CD4-positive, alpha-beta T cell (primary cell): ENCODE measurements at regions of chr4 and their contacts with region 1.

Region 1: DNA sequence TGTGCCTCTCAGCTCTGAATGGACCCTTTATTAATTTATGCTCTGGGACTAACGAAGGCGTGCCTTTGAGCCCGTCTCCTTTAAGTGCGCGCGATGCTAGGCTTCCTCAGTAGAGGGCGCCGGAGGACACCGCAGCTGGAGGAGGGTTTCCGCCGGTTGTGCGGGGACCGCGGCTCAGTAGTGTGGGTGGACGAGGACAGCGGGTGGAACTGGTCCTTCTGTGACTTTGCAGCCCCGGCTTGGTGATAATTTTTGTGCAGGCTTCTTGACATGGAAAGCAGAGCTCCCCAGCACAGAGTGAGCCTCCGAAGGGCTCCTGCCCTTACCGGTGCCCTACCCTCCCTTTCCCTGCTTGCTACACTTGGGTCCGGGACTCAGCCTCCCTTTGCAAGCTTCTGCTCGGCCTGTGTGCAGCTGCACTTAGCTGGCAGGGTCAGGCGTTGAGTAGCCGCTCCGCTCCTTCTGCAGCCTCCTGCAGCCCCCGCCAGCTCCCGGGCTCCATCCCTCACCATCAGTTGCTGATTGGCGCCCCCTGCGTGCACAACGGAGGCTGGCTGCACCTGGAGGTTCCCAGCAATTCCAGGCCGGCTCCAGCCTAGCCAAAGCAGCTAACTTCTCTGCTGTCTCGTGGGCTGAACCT is 26.8 kb upstream of the BOD1L1 start:
- DNase-seq: peak; percentile 55 to 84 (median 73)
- ATAC-seq: peak; percentile 93
- H3K4me3 ChIP-seq: peak overlapping the region; percentile 60
- H3K4me3 Mint-ChIP-seq: peak overlapping the region; percentile 94
- H3K27ac ChIP-seq: no peak overlapping the region
- H3K27ac Mint-ChIP-seq: no peak overlapping the region
- H3K4me1 ChIP-seq: peaks cover 6% of the 10 kb centered on the region
- H3K4me1 Mint-ChIP-seq: peaks cover 18% of the 10 kb centered on the region
- H3K27me3 ChIP-seq: no peaks in the 10 kb centered on the region
- H3K27me3 Mint-ChIP-seq: peaks cover 21% of the 10 kb centered on the region
- CTCF ChIP-seq: peak; percentile 84

Region 2: DNA sequence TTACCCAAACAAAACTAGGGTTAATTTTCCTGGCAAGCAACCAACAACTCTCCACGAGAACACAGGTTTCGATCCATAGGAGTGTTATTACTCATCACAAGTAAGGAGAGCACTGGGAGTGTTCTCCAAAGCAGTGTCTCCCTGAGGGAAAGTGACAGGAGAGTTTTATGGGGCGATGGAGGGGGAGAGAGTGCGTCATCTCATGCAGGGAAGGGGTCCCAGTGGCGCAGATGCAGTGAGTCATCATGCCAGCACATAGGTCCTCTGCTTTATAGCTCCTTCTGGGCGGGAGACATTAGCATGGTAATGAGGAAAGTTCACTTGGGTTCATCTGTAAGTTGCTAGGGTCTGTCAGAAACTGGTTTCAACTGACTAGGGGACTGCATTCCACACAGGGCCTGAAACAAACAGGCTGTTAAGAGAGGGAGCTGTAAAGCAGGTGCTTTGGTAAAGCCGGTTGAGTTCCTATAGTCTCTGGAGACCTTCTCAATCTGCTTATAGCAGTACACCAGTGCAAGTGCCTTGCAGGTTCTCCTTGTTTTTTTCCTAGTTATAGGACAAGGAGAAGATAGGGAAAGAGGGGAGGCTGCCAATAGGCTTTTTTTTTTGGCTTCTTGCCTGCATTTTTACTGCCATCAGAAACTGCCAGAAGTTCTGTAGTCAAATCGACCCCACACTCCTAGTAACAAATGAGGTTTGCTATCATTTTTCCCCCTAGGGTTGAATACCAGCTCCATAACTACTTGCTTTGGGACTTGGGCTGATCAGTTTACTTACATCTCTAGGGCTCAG is 13.9 kb before region 1 on chr4:
- CTCF ChIA-PET with region 1: interaction called, 11 read pairs
- POLR2A ChIA-PET with region 1: no interaction called
- intact Hi-C with region 1: no loop called
- DNase-seq: no peak
- ATAC-seq: no peak
- H3K4me3 ChIP-seq: no peak overlapping the region
- H3K4me3 Mint-ChIP-seq: no peak overlapping the region
- H3K27ac ChIP-seq: no peak overlapping the region
- H3K27ac Mint-ChIP-seq: no peak overlapping the region
- H3K4me1 ChIP-seq: no peaks in the 10 kb centered on the region
- H3K4me1 Mint-ChIP-seq: no peaks in the 10 kb centered on the region
- H3K27me3 ChIP-seq: peaks cover 13 to 17% of the 10 kb centered on the region in 2 experiments
- H3K27me3 Mint-ChIP-seq: peaks cover 67% of the 10 kb centered on the region
- CTCF ChIP-seq: no peak

Region 3: GRCh38 chr4:13694256-13694655 is 40.0 kb after region 1 on chr4:
- CTCF ChIA-PET with region 1: no interaction called
- POLR2A ChIA-PET with region 1: no interaction called
- intact Hi-C with region 1: no loop called
- DNase-seq: no peak
- ATAC-seq: no peak
- H3K4me3 ChIP-seq: no peak overlapping the region
- H3K4me3 Mint-ChIP-seq: no peak overlapping the region
- H3K27ac ChIP-seq: no peak overlapping the region
- H3K27ac Mint-ChIP-seq: no peak overlapping the region
- H3K4me1 ChIP-seq: no peaks in the 10 kb centered on the region
- H3K4me1 Mint-ChIP-seq: no peaks in the 10 kb centered on the region
- H3K27me3 ChIP-seq: no peaks in the 10 kb centered on the region
- H3K27me3 Mint-ChIP-seq: peaks cover 24% of the 10 kb centered on the region
- CTCF ChIP-seq: no peak

Region 4: DNA sequence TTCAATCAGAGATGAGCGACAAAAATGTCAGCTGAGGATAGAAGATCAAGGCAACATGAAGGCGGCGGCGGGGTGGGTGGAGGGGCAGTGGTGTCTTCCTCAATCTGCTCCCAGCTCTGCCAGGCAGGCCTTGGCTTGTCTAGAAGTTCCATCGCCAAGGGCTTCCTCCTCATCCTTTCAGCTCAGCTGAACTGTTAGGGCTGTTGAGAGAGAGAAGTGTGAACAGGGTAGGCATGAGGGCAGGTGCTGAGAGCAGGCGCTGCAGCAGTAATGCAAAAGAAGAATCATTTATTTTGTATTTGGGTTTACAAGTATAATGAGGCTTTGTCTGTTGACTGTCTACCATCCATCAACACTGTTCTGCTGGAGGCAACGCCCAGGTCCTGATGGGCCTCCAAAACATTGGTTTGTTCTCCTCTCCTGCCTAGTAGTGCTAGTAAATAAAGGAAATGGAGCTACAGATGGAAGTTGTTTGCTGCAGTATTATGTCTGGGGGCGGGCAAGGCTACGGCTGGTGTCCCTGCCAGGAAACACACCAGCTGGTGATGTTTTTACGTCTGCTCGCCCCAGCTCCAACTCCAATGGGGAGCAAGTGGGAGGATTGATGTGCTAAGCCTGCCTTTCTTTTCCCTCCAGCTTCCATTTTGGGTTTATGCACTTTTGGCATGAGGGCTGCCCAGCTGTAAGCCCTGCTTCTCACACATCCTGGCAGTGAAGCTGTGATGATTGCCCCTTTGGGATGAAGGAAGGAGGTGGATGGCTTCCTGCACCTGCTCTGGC is 112.7 kb after region 1 on chr4:
- CTCF ChIA-PET with region 1: no interaction called
- POLR2A ChIA-PET with region 1: no interaction called
- intact Hi-C with region 1: no loop called
- DNase-seq: no peak
- ATAC-seq: no peak
- H3K4me3 ChIP-seq: no peak overlapping the region
- H3K4me3 Mint-ChIP-seq: no peak overlapping the region
- H3K27ac ChIP-seq: no peak overlapping the region
- H3K27ac Mint-ChIP-seq: no peak overlapping the region
- H3K4me1 ChIP-seq: no peaks in the 10 kb centered on the region
- H3K4me1 Mint-ChIP-seq: no peaks in the 10 kb centered on the region
- H3K27me3 ChIP-seq: no peaks in the 10 kb centered on the region
- H3K27me3 Mint-ChIP-seq: no peaks in the 10 kb centered on the region
- CTCF ChIP-seq: no peak

Region 5: GRCh38 chr4:15231265-15232091 is 1577.2 kb after region 1 on chr4:
- CTCF ChIA-PET with region 1: no interaction called
- POLR2A ChIA-PET with region 1: no interaction called
- intact Hi-C with region 1: loop called in 1 of 2 experiments (anchors 10 kb)
- DNase-seq: peak; percentile 57 to 86 (median 66)
- ATAC-seq: peak; percentile 87
- H3K4me3 ChIP-seq: no peak overlapping the region
- H3K4me3 Mint-ChIP-seq: no peak overlapping the region
- H3K27ac ChIP-seq: no peak overlapping the region
- H3K27ac Mint-ChIP-seq: no peak overlapping the region
- H3K4me1 ChIP-seq: peaks cover 20% of the 10 kb centered on the region
- H3K4me1 Mint-ChIP-seq: peaks cover 33% of the 10 kb centered on the region
- H3K27me3 ChIP-seq: no peaks in the 10 kb centered on the region
- H3K27me3 Mint-ChIP-seq: no peaks in the 10 kb centered on the region
- CTCF ChIP-seq: peak; percentile 92

Region 6: DNA sequence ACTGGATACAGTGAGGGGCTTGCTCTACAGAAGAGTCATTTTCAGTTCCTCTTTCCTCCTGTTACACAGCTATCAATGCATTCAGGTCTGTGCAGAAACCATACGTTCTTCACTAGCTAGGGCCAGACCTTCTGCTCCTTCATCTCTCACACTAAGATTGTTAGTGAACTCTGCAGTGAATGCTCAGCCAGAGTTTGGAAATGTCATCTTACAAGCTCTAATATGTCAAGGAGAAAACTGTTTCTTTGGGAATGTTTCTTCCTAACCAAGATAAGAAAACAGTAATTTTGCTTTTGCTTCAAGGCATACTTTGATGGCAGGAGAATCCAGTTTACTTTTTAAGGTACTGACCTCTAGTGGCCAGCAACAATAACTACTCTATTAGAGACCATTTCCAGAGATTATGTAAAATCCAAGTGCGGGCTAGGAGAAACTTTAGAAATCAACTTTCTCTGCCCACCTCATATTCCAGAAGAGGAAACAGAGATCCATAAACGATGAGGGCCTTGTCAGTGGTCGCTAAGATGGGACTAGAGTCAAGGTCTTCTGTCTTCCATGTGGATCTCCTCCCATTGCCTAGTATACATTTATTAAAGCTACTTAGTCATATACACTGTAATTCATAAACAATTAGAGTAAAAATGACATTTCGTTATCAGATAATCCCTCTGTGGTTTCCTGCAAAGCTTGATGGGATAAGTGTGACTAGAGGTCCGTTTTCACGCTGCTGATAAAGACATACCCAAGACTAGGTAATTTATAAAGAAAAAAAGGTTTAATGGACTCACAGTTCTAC is 1803.3 kb after region 1 on chr4:
- CTCF ChIA-PET with region 1: no interaction called
- POLR2A ChIA-PET with region 1: no interaction called
- intact Hi-C with region 1: loop called (anchors 2 to 5 kb)
- DNase-seq: peak in 3 of 14 experiments; percentile 51 to 62 (median 54)
- ATAC-seq: peak; percentile 59
- H3K4me3 ChIP-seq: no peak overlapping the region
- H3K4me3 Mint-ChIP-seq: no peak overlapping the region
- H3K27ac ChIP-seq: no peak overlapping the region
- H3K27ac Mint-ChIP-seq: no peak overlapping the region
- H3K4me1 ChIP-seq: no peaks in the 10 kb centered on the region
- H3K4me1 Mint-ChIP-seq: peaks cover 11% of the 10 kb centered on the region
- H3K27me3 ChIP-seq: no peaks in the 10 kb centered on the region
- H3K27me3 Mint-ChIP-seq: no peaks in the 10 kb centered on the region
- CTCF ChIP-seq: peak; percentile 80